GM12878 (cell line): ENCODE measurements at regions of chr1 and their contacts with region 1.

Region 1: DNA sequence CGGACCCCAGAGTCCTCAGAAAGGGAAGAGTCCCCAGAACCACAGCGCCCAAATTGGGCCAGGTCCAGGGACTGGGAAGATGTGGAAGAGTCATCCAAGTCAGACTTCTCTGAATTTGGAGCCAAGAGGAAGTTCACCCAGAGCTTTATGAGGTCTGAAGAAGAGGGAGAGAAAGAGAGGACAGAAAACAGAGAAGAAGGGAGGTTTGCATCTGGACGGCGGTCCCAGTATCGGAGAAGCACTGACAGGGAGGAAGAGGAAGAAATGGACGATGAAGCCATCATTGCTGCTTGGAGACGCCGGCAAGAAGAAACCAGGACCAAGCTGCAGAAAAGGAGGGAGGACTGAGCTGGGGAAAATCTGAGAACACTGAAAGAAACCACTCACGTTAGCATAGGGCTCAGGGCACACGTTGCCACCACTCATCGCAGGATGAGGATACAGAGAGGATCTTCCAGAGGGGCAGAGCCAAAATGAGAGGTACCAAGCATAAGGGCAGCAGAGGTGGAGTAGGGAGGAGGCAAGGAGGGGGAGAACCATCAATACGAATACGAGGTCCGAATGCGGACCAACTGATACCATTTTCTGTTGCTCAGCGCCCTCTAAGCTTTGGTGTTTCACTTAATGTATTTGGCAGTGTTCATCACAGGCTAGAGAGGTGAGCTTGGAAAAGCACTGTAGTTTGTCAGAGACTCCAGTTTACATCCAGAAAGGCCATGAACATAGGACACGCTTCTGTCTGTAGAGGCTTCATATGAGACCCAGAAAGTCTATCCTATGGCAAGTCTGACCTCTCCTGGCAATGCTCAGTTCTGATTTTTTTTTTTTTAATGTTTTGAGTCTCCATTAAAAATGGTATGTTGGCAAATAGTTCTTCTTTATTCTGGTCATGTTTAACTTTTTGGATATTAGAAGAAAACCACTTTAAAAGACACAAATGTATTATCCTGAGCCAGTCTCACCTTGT is 34.7 kb downstream of the STYXL2 start:
- DNase-seq: no peak
- ATAC-seq: 0 out of 3 replicates have a peak, but pooled peaks have one; percentile 28
- H3K4me3 ChIP-seq: no peak overlapping the region
- H3K27ac ChIP-seq: no peak overlapping the region
- H3K4me1 ChIP-seq: no peaks in the 10 kb centered on the region
- H3K27me3 ChIP-seq: peaks cover 7% of the 10 kb centered on the region in 2 experiments; a peak in 2 of 4 replicates
- CTCF ChIP-seq: peak in 1 of 3 experiments; percentile 26; a peak in 1 of 6 replicates
- EP300 ChIP-seq: no peak
- POLR2A ChIP-seq: no peak
- RAD21 ChIP-seq: peak; percentile 58

Region 2: DNA sequence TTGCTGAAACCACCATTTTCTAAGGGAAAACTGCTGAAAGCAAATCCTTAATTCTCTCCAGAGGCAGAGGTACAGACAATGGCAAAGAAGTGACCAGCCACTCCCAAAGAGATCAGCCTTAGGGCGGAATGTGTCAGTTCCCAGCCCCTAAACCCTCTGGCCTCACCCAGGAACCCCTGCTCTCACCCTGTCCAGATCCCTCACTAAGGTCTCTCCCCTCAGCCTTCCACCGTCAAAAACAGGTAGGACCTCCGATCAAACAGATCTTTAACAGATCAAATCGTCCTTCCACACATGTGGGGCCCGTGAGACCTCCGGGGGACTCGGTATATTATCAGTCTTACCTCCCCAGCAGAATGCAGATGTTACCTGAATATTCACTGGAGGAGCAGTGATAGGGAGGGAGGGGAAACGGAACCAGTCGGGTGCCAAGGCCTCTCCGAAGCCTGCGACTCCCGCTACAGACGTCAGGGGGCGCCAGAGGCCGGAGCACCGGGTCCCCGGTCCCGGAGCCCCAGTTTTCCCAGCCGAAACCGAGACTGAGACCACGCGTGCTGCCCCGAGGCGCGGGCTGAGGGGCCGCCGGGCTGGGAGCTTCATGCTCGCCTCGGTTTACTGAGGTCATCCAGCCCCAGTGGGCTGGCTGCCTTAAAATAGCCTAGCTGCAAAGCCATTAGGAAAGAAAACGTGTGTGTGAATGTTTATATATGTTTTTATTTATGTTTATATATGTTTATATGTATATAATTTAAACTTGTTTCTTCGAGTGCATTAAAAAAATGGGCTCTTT is 62.0 kb before region 1 on chr1:
- CTCF ChIA-PET with region 1: interaction called, 7 read pairs
- POLR2A ChIA-PET with region 1: no interaction called
- RAD21 ChIA-PET with region 1: interaction called, 4 read pairs
- SMC1A ChIA-PET with region 1: interaction called, 7 read pairs
- in situ Hi-C with region 1: loop called (anchors 5 kb)
- intact Hi-C with region 1: loop called (anchors 1 kb)
- DNase-seq: no peak
- ATAC-seq: peak; percentile 97
- H3K4me3 ChIP-seq: peak overlapping the region; percentile 70; the same call in 1 of the 2 replicates
- H3K27ac ChIP-seq: no peak overlapping the region
- H3K4me1 ChIP-seq: no peaks in the 10 kb centered on the region
- H3K27me3 ChIP-seq: no peaks in the 10 kb centered on the region; a peak in 1 of 4 replicates
- CTCF ChIP-seq: peak; percentile 92 to 98 (median 97); a peak in 5 of 6 replicates
- EP300 ChIP-seq: no peak
- POLR2A ChIP-seq: no peak
- RAD21 ChIP-seq: peak; percentile 87

Region 3: DNA sequence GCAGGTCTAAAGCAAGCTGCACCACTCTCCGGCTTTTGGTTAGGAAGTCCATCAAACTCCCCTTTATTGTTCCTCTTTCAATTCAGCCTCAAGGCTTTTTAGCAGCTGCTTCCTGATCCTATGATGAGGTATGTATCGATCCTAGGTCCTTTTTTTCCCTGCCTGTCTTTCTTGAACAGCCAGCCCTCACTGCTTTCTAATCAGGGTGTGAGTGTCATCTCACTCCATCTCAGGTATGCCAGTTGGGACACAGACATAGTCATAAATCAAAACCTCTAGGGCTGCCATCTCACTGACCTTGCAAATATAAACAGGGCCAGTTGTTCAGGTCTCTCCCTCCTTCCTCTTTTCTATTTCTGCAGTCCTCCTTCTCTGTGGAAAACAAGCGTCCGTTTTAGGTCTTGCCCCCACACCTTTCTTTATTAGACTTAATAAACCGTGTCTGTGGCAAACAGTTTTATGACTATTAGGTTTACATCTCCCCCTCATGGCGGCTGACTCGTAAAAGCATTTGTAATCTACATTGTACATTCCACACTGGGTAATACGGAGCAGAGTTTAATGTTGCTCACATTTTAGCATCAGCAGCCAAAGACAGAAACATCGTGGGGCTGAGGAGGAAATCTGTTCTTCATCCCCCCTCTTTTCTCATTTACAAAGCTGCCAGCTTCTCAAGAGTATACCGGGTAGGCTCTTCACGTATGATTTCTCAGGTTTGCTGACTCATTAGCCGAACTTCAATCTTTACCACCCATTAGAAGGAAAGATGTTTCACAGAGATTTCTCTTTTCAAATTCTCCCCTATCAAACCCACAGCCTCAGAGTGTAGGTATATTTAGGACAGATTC is 23.0 kb before region 1 on chr1:
- CTCF ChIA-PET with region 1: interaction called, 10 read pairs
- POLR2A ChIA-PET with region 1: no interaction called
- RAD21 ChIA-PET with region 1: no interaction called
- SMC1A ChIA-PET with region 1: interaction called, 4 read pairs
- in situ Hi-C with region 1: no loop called
- intact Hi-C with region 1: no loop called
- DNase-seq: no peak
- ATAC-seq: peak; percentile 65
- H3K4me3 ChIP-seq: no peak overlapping the region
- H3K27ac ChIP-seq: no peak overlapping the region
- H3K4me1 ChIP-seq: peaks cover 28% of the 10 kb centered on the region
- H3K27me3 ChIP-seq: no peaks in the 10 kb centered on the region
- CTCF ChIP-seq: peak in 1 of 3 experiments; percentile 21; a peak in 1 of 6 replicates
- EP300 ChIP-seq: no peak
- POLR2A ChIP-seq: no peak
- RAD21 ChIP-seq: no peak